ENCODE measurements at regions of chr18 and their contacts with region 1.

Region 1: GRCh38 chr18:51197661-51198424 is at the start of gene MEX3C:
- DNase-seq: peak; percentile 97 to 99 (median 99)
- ATAC-seq: peak; percentile 90
- H3K4me3 ChIP-seq: peak within 1 kb of the TSS; percentile 71
- H3K4me3 Mint-ChIP-seq: peak within 1 kb of the TSS; percentile 83 to 99 (median 97)
- H3K27ac ChIP-seq: peak within 1 kb of the TSS; percentile 80
- H3K27ac Mint-ChIP-seq: peak within 1 kb of the TSS; percentile 92 to 99 (median 97)
- H3K4me1 ChIP-seq: peaks cover 17% of the 10 kb centered on the region in 2 donors
- H3K4me1 Mint-ChIP-seq: peaks cover 20 to 35% (median 31%) of the 10 kb centered on the region in 7 donors
- H3K27me3 ChIP-seq: no peaks in the 10 kb centered on the region
- H3K27me3 Mint-ChIP-seq: no peaks in the 10 kb centered on the region
- total RNA-seq, gene MEX3C: 47.1 to 68.8 (median 53.7) TPM

Region 2: GRCh38 chr18:50266248-50266704 is 931.6 kb before region 1 on chr18 and contains the start of gene CFAP53:
- CTCF ChIA-PET with region 1: no interaction called
- POLR2A ChIA-PET with region 1: no interaction called
- intact Hi-C with region 1: loop called in 1 of 2 experiments (anchors 5 kb)
- DNase-seq: peak; percentile 51 to 83 (median 69)
- ATAC-seq: peak; percentile 88
- H3K4me3 ChIP-seq: peak within 1 kb of the TSS; percentile 59
- H3K4me3 Mint-ChIP-seq: peak within 1 kb of the TSS; percentile 79 to 94 (median 90)
- H3K27ac ChIP-seq: peak within 1 kb of the TSS; percentile 50
- H3K27ac Mint-ChIP-seq: peak within 1 kb of the TSS; percentile 57 to 92 (median 81)
- H3K4me1 ChIP-seq: peaks cover 4 to 5% of the 10 kb centered on the region in 2 donors
- H3K4me1 Mint-ChIP-seq: peaks cover 9 to 29% (median 25%) of the 10 kb centered on the region in 7 donors
- H3K27me3 ChIP-seq: no peaks in the 10 kb centered on the region
- H3K27me3 Mint-ChIP-seq: peaks cover 0 to 17% (median 0%) of the 10 kb centered on the region in 5 donors
- total RNA-seq, gene CFAP53: 0.19 to 1.8 (median 0.64) TPM

Region 3: GRCh38 chr18:50307738-50308470 is 889.9 kb before region 1 on chr18:
- CTCF ChIA-PET with region 1: no interaction called
- POLR2A ChIA-PET with region 1: no interaction called
- intact Hi-C with region 1: loop called in 1 of 2 experiments (anchors 5 kb)
- DNase-seq: peak; percentile 70 to 93 (median 89)
- ATAC-seq: peak; percentile 96
- H3K4me3 ChIP-seq: peak overlapping the region; percentile 45
- H3K4me3 Mint-ChIP-seq: peak overlapping the region; percentile 76 to 97 (median 92)
- H3K27ac ChIP-seq: peak overlapping the region; percentile 65
- H3K27ac Mint-ChIP-seq: peak overlapping the region; percentile 52 to 93 (median 82)
- H3K4me1 ChIP-seq: peaks cover 0 to 8% of the 10 kb centered on the region in 2 donors
- H3K4me1 Mint-ChIP-seq: peaks cover 0 to 20% (median 16%) of the 10 kb centered on the region in 7 donors
- H3K27me3 ChIP-seq: peaks cover 0 to 3% of the 10 kb centered on the region in 2 donors
- H3K27me3 Mint-ChIP-seq: peaks cover 0 to 35% (median 19%) of the 10 kb centered on the region in 5 donors

Region 4: DNA sequence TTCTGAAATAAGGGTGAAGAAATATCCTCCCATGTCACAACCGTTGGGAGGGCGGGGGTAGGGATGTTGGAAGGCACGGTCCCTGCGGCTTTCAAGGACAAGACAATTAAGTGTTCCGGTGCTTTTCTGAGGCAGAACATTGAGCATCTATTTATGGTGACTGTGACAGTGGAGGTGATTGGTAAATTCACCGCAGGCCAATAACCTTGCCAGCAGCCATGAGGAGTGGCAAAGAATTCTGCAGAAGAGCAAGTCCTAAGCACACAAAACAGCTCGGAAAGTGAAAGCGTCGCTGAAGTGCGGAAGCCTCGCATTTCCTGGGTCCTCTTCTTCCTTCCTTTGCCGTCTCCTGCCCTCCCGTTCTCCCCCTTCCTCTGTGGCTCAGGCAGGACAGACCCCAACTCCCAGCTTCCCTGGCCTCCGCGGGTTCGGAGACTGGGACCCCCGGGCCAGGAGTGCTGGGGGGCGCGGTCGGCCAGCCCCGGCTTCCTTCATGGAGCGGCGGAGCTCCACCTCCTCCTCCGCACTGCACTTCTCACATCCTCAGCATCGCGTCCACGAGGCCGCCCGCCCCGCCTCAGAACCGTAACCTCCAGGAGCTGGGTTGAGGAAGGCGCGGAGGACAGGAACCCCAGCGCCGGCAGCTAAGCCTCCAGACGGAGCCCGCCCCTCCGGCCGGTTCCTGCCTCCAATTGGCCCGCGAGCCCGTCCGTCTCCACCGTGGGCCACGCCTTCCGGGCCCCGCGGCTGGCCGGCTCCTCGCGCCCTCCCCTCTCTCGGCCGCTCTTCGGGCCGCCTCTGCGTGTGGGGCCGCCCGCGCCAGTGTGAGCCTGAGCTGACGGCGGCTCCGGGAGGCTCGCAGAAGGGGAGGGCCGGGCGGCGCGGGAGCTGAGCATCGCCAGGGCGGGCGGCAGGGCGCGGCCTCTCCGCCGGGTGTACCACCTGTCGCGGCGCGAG is 319.2 kb before region 1 on chr18 and contains the start of gene ME2:
- CTCF ChIA-PET with region 1: no interaction called
- POLR2A ChIA-PET with region 1: interaction called, 25 read pairs
- intact Hi-C with region 1: loop called (anchors 1 kb)
- DNase-seq: peak; percentile 82 to 95 (median 89)
- ATAC-seq: peak; percentile 94
- H3K4me3 ChIP-seq: peak within 1 kb of the TSS; percentile 61
- H3K4me3 Mint-ChIP-seq: peak within 1 kb of the TSS; percentile 95 to 99 (median 97)
- H3K27ac ChIP-seq: peak within 1 kb of the TSS; percentile 98
- H3K27ac Mint-ChIP-seq: peak within 1 kb of the TSS; percentile 93 to 99 (median 98)
- H3K4me1 ChIP-seq: peaks cover 17% of the 10 kb centered on the region in 2 donors
- H3K4me1 Mint-ChIP-seq: peaks cover 18 to 37% (median 34%) of the 10 kb centered on the region in 7 donors
- H3K27me3 ChIP-seq: no peaks in the 10 kb centered on the region
- H3K27me3 Mint-ChIP-seq: peaks cover 0 to 11% (median 4%) of the 10 kb centered on the region in 5 donors
- total RNA-seq, gene ME2: 29.4 to 84.7 (median 43.2) TPM

Region 5: DNA sequence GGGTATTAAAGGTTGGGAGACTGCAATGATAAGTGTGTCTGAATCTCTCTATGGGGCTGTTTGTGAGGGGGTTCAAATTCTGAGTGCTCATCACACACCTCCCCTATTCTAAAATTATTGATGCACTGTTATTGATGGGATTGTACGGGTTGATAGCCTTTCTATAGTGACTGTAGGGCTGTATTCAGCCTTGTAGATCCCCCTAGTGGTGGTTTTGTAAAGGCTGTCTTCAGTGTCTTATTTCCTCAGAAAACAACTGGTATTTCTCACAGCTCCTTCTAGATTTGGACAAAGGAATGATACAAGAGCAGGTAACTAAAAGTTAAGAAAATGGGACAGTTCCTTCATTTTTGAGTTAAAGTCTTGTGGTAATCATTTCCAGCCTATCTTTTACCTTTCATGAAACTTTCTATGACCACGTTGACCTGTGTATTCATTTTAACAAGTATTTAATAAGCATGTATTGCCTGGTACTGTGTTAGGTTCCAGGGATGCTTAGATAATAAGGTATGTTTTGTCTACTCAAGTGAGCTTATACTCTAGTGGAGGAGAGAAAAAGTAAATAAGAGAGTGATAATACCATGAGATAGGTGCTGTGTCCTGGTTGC is 146.6 kb before region 1 on chr18:
- CTCF ChIA-PET with region 1: no interaction called
- POLR2A ChIA-PET with region 1: no interaction called
- intact Hi-C with region 1: loop called in 1 of 2 experiments (anchors 5 kb)
- DNase-seq: peak in 7 of 9 donors; percentile 47 to 71 (median 62)
- ATAC-seq: peak; percentile 95
- H3K4me3 ChIP-seq: no peak overlapping the region
- H3K4me3 Mint-ChIP-seq: no peak overlapping the region
- H3K27ac ChIP-seq: no peak overlapping the region
- H3K27ac Mint-ChIP-seq: peak overlapping the region in 8 of 9 donors; percentile 3 to 80 (median 36)
- H3K4me1 ChIP-seq: peaks cover 8% of the 10 kb centered on the region in 2 donors
- H3K4me1 Mint-ChIP-seq: peaks cover 17 to 55% (median 42%) of the 10 kb centered on the region in 7 donors
- H3K27me3 ChIP-seq: no peaks in the 10 kb centered on the region
- H3K27me3 Mint-ChIP-seq: no peaks in the 10 kb centered on the region

Region 6: DNA sequence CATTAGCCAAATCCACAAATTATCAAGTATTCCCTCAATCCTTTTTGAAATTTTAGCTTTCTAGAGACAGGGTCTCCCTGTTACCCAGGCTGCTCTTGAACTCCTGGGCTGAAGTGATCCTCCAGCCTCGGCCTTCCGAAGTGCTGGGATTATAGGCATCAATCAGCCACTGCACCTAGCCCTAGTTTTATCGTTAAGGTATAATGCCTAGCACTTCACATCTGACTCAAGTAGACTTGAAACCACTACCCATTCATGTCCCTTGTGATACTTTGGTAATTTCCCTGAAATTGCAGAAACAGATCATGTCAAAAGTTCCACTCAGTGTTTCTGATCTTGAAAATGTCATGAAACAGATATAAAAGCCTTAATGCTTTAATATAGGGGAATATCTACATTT is 26.6 kb before region 1 on chr18:
- CTCF ChIA-PET with region 1: no interaction called
- POLR2A ChIA-PET with region 1: interaction called, 5 read pairs
- intact Hi-C with region 1: loop called in 1 of 2 experiments (anchors 1 kb)
- DNase-seq: no peak
- ATAC-seq: no peak
- H3K4me3 ChIP-seq: no peak overlapping the region
- H3K4me3 Mint-ChIP-seq: peak overlapping the region in 1 of 10 donors; percentile 44
- H3K27ac ChIP-seq: no peak overlapping the region
- H3K27ac Mint-ChIP-seq: peak overlapping the region in 5 of 9 donors; percentile 25 to 83 (median 46)
- H3K4me1 ChIP-seq: no peaks in the 10 kb centered on the region
- H3K4me1 Mint-ChIP-seq: peaks cover under 1 to 66% (median 31%) of the 10 kb centered on the region in 7 donors
- H3K27me3 ChIP-seq: no peaks in the 10 kb centered on the region
- H3K27me3 Mint-ChIP-seq: no peaks in the 10 kb centered on the region

Region 7: GRCh38 chr18:51300912-51301311 is 103.1 kb after region 1 on chr18:
- CTCF ChIA-PET with region 1: no interaction called
- POLR2A ChIA-PET with region 1: no interaction called
- intact Hi-C with region 1: loop called in 1 of 2 experiments (anchors 5 kb)
- DNase-seq: no peak
- ATAC-seq: no peak
- H3K4me3 ChIP-seq: no peak overlapping the region
- H3K4me3 Mint-ChIP-seq: no peak overlapping the region
- H3K27ac ChIP-seq: no peak overlapping the region
- H3K27ac Mint-ChIP-seq: no peak overlapping the region
- H3K4me1 ChIP-seq: no peaks in the 10 kb centered on the region
- H3K4me1 Mint-ChIP-seq: peaks cover 0 to 4% (median 0%) of the 10 kb centered on the region in 7 donors
- H3K27me3 ChIP-seq: no peaks in the 10 kb centered on the region
- H3K27me3 Mint-ChIP-seq: peaks cover 4 to 15% (median 10%) of the 10 kb centered on the region in 5 donors

Region 8: GRCh38 chr18:51561821-51562220 is 364.0 kb after region 1 on chr18:
- CTCF ChIA-PET with region 1: no interaction called
- POLR2A ChIA-PET with region 1: no interaction called
- intact Hi-C with region 1: no loop called
- DNase-seq: no peak
- ATAC-seq: no peak
- H3K4me3 ChIP-seq: no peak overlapping the region
- H3K4me3 Mint-ChIP-seq: no peak overlapping the region
- H3K27ac ChIP-seq: no peak overlapping the region
- H3K27ac Mint-ChIP-seq: no peak overlapping the region
- H3K4me1 ChIP-seq: no peaks in the 10 kb centered on the region
- H3K4me1 Mint-ChIP-seq: peaks cover 0 to 1% (median 0%) of the 10 kb centered on the region in 7 donors
- H3K27me3 ChIP-seq: no peaks in the 10 kb centered on the region
- H3K27me3 Mint-ChIP-seq: peaks cover 0 to 45% (median 27%) of the 10 kb centered on the region in 5 donors

Measured in naive thymus-derived CD4-positive, alpha-beta T cell (primary cell).